Natural killer cell (primary cell): ENCODE measurements at regions of chr11 and their contacts with region 1.

Region 1: DNA sequence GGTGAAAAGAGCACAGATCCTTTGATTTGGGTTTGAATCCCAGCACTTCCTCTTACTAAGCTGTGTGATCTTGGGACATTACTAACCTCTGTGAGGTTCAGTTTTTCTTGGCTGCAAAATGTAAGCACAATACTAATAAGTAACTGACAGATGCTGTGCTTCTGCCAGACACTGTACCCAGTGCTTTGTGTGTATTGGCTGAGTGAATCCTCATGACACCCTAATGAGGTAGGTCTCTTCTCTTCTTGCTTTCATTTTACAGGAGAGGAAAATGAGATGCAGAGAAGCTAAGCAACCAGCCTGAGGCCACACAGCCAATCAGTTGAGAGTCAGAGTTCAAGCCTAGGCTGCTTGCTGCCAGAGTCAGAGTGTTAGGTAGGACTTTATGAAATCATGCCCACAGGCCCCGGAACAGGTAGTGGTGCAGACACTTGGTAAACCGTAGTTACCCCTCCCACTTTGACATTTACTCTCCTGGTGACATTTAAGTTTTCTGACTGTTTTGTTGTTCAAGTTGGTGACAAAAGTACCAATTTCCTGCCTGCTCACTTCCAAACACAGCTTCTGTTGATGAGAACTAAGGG is 21.2 kb downstream of the PTPRJ start:
- DNase-seq: peak; percentile 76 to 96
- ATAC-seq: peak; percentile 85 to 96 (median 93)
- H3K4me3 ChIP-seq: no peak overlapping the region
- H3K4me3 Mint-ChIP-seq: peak overlapping the region; percentile 88
- H3K27ac ChIP-seq: peak overlapping the region; percentile 90
- H3K27ac Mint-ChIP-seq: peak overlapping the region; percentile 95 to 97
- H3K4me1 ChIP-seq: peaks cover 87% of the 10 kb centered on the region
- H3K4me1 Mint-ChIP-seq: peaks cover 73 to 81% of the 10 kb centered on the region in 2 donors
- H3K27me3 ChIP-seq: no peaks in the 10 kb centered on the region
- H3K27me3 Mint-ChIP-seq: no peaks in the 10 kb centered on the region
- CTCF ChIP-seq: no peak

Region 2: GRCh38 chr11:48019217-48019584 is 17.7 kb after region 1 on chr11:
- intact Hi-C with region 1: loop called (anchors 2 kb)
- DNase-seq: peak in 1 of 2 donors; percentile 43
- ATAC-seq: peak; percentile 24 to 54 (median 45)
- H3K4me3 ChIP-seq: no peak overlapping the region
- H3K4me3 Mint-ChIP-seq: peak overlapping the region; percentile 25
- H3K27ac ChIP-seq: peak overlapping the region; percentile 72
- H3K27ac Mint-ChIP-seq: peak overlapping the region; percentile 99
- H3K4me1 ChIP-seq: peaks cover 80% of the 10 kb centered on the region
- H3K4me1 Mint-ChIP-seq: peaks cover 71 to 82% of the 10 kb centered on the region in 2 donors
- H3K27me3 ChIP-seq: no peaks in the 10 kb centered on the region
- H3K27me3 Mint-ChIP-seq: no peaks in the 10 kb centered on the region
- CTCF ChIP-seq: no peak